Cardiac septum (tissue), 1 donor: ENCODE measurements at regions of chr11 and their contacts with region 1.

Region 1: GRCh38 chr11:69101115-69101791 is 52.5 kb downstream of the TPCN2 start:
- DNase-seq: no peak

Region 2: DNA sequence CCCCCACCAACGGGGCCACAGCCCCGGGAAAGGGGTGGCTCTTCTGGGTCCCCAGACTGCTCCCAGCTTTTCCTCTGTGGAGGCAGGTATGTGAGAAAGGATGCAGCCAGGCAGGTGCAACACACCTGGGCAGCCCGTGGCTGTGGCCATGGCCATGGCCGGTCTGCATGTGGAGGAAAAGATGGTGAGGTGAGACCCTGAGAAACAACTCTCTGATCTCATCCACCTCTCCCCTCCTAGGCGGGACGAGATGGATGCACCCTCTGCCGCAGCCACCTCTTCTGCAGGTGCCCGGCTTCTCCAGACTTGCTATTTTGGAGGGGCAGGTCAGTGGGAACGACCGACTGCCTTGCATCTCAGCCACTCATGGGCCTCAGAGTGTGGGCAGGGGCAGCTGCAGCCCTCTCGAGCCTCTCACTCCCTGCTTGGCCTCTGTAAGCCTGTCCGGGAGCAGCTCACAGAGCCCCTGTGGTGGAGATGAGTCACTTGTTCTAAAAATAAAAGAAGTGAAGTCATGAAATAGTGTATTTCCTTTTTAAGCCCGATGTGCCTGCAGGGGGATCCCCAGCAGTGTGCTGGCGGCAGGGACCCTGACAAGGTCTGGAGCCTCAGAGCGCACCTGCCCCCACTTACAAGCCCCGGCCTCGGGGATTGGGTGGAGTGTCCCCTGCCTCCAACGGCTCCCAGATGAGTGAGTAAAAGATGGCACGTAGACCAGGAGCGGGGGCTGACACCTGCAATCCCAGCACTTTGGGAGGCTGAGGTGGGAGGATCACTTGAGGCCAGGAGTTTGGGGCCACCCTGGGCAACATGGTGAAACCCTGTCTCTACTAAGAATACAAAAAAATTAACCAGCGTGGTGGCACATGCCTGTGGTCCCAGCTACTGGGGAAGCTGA is 65.2 kb after region 1 on chr11:
- intact Hi-C with region 1: loop called (anchors 5 kb)
- DNase-seq: no peak

Region 3: DNA sequence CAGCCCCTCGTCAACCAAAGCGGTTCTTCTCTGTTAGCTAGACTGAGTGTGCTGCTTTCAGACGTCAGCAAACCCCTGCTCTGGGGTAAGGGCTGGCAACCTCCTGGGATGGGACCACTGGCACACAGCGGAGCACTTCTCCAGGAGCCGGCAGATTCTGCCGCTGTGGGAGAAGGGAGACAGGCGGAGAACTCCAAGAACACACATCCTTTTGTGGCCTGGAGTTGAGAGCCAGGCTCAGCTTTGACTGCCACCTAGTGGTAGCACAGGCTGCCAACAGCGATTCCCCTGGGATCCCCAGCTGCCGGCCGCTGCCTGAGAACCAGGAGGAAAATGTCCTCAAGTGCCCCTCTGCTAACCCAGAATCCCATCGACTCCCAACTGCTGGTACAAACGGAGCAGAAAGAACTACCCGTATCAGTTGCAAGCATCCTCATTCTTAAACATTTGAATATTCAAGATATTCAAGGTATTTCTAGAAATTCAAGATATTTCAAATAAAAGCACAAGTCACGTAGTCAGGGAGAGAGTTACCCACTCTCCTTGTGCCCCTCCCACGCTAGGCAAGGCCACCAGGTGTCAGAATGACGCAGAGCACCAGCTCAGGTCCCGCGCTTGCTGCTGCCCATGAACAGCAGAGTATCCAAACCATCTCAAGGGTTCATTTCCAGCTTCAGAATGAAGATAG is 569.0 kb after region 1 on chr11:
- intact Hi-C with region 1: loop called (anchors 2 kb)
- DNase-seq: peak; percentile 91